SK-N-SH (cell line): ENCODE measurements at regions of chr2 and their contacts with region 1.

Region 1: DNA sequence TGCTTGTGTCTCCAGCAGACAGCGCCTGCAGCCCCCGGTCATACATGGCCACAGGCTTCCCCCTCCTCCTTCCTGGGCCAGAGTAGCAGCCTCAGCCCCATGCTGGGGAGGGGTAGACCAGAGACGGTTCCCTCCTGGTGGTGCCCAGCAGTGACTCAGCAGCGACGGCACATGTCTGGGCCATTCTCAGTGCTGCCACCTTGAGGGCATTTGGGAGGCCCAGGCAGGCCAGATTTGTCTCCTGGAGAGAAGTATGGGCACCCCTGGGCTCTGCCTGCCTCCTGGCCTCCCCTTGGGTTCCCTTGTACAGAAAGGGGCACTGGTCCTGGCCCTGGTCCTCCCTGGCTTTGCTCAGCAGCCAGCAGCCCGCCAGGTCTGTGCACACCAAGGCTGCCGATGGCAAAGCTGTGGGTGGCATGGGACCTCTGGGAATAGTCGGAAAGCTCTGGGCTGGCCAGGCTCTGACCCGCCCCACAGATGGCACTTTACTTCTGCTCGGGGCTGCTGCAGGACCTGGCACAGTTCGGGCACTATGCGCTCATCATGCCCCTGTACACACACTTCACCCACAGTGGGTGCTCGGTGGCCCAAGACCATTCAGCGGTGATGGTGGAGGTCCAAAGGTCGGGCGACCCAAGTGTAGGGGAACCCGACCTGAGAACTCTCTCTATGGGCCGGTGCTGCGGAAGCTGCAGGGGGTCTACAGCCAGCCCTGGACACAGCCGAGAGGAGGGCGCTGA is 11.4 kb upstream of the ALPI start:
- DNase-seq: peak; percentile 75
- H3K4me3 ChIP-seq: no peak overlapping the region; a peak in 1 of 4 replicates
- H3K27ac ChIP-seq: no peak overlapping the region
- H3K4me1 ChIP-seq: no peaks in the 10 kb centered on the region; a peak in 1 of 4 replicates
- H3K27me3 ChIP-seq: no peaks in the 10 kb centered on the region
- CTCF ChIP-seq: peak; percentile 64
- EP300 ChIP-seq: no peak
- RAD21 ChIP-seq: no peak; the same call in 1 of the 2 replicates

Region 2: DNA sequence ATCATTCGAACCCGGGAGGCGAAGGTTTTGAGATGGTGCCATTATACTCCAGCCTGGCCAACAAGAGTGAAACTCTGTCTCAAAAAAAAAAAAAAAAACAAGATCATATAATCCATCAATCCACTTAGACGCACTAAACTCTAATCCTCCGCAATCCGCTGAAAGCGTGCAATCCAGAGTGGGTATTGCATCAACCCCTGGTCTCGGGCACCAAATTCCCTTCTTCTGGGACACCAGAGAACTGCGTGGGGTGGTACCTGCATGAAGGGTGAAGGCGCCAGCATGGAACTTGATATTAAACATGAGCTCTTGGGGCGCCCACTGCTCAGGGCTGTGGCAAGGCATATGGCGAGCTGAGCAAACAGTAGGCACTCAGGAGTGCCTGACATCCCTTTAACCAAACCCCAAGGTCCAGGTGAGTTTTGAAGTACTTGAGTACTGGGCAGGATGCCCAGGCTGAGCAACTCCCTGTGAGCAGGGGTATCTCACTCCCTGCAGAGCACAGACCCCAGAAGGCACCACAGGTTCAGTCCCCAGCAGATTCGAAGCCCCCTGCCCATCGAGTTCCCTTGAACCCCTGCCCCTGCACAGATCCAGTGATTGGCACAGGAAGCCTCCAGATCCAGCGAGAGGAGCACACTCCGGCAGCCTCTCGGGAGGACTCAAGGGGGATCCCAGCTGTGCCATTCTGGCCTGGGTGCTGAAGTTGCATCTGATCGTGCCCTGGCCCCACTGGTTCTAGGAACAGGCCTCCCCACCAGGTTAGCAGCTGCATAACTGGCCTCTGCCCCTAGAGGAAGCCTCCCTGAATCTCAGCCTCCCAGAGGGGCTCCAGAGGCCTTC is 19.3 kb after region 1 on chr2:
- CTCF ChIA-PET with region 1: interaction called, 12 read pairs
- POLR2A ChIA-PET with region 1: no interaction called
- DNase-seq: peak; percentile 5
- H3K4me3 ChIP-seq: no peak overlapping the region
- H3K27ac ChIP-seq: no peak overlapping the region
- H3K4me1 ChIP-seq: no peaks in the 10 kb centered on the region
- H3K27me3 ChIP-seq: peaks cover 11% of the 10 kb centered on the region; the same call in 1 of the 2 replicates
- CTCF ChIP-seq: no peak
- EP300 ChIP-seq: no peak
- RAD21 ChIP-seq: no peak

Region 3: GRCh38 chr2:232511336-232511888 is 66.8 kb after region 1 on chr2:
- CTCF ChIA-PET with region 1: interaction called, 11 read pairs
- POLR2A ChIA-PET with region 1: no interaction called
- DNase-seq: peak; percentile 68
- H3K4me3 ChIP-seq: no peak overlapping the region
- H3K27ac ChIP-seq: no peak overlapping the region
- H3K4me1 ChIP-seq: peaks cover 0 to 22% of the 10 kb centered on the region in 2 experiments; a peak in 1 of 4 replicates
- H3K27me3 ChIP-seq: peaks cover 19% of the 10 kb centered on the region
- CTCF ChIP-seq: no peak
- EP300 ChIP-seq: no peak
- RAD21 ChIP-seq: no peak